Dendritic cell treated with granulocyte-macrophage colony-stimulating factor and Interleukin-4, amounts not matched to agents 40 ng/mL and 50 ng/mL, for 4 days (primary cell): ENCODE measurements at regions of chr7 and their contacts with region 1.

Region 1: GRCh38 chr7:132557489-132558044 is 18.7 kb downstream of the PLXNA4 start:
- H3K4me3 Mint-ChIP-seq: no peak overlapping the region
- H3K27ac Mint-ChIP-seq: no peak overlapping the region
- H3K4me1 Mint-ChIP-seq: no peaks in the 10 kb centered on the region
- H3K27me3 Mint-ChIP-seq: peaks cover 48% of the 10 kb centered on the region

Region 2: GRCh38 chr7:132318352-132319318 is 238.9 kb before region 1 on chr7:
- intact Hi-C with region 1: loop called (anchors 1 kb)
- H3K4me3 Mint-ChIP-seq: no peak overlapping the region
- H3K27ac Mint-ChIP-seq: no peak overlapping the region
- H3K4me1 Mint-ChIP-seq: peaks cover 10% of the 10 kb centered on the region
- H3K27me3 Mint-ChIP-seq: peaks cover 37% of the 10 kb centered on the region

Region 3: DNA sequence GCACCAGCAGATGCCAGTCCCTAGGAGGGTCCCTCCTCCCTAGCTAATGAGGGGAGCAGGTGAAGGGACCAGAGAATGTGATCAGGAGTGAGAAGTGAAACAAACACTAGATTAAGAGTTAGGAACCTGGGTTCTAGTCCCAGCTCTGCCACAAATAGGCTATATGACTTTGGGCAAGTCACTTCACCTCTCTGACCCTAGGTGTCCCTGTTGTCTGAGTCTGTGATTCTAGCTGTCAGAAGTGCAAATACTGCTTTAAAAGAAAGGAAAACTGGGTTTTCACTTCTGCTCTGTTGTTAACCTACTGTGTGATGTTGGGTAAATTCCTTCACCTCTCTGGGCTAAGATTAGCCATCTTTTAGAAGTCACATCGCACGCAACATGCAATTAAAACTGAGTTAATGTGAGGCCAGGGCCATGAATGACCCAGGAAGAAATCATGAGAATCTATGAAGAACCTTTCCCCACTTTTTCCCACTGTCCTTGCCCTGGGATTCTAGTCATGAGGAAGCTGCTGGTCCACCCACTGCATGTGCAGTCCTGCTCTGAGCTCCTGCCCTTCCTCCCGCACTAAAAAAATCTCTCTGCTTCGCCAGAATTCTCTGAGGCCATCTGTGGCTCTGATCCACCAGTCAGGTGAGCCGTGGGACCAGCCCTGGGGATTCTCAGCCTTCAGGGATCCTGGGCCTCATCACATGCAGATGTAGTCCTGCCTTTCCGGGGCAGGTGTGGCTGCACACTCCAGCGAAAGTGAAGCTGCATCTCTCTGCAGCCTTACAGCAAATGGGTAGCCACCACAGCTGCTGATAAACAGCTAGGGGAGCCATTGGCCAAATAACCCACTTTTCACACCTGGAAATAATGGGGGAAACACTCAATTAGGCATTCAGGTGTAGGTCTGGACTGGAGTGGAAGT is 163.0 kb before region 1 on chr7:
- intact Hi-C with region 1: loop called (anchors 5 kb)
- H3K4me3 Mint-ChIP-seq: no peak overlapping the region
- H3K27ac Mint-ChIP-seq: no peak overlapping the region
- H3K4me1 Mint-ChIP-seq: peaks cover 28% of the 10 kb centered on the region
- H3K27me3 Mint-ChIP-seq: peaks cover 34% of the 10 kb centered on the region